Activated CD4-positive, alpha-beta memory T cell treated with anti-CD3 and anti-CD28 coated beads for 36 hours (primary cell): ENCODE measurements at regions of chr5 and their contacts with region 1.

Region 1: DNA sequence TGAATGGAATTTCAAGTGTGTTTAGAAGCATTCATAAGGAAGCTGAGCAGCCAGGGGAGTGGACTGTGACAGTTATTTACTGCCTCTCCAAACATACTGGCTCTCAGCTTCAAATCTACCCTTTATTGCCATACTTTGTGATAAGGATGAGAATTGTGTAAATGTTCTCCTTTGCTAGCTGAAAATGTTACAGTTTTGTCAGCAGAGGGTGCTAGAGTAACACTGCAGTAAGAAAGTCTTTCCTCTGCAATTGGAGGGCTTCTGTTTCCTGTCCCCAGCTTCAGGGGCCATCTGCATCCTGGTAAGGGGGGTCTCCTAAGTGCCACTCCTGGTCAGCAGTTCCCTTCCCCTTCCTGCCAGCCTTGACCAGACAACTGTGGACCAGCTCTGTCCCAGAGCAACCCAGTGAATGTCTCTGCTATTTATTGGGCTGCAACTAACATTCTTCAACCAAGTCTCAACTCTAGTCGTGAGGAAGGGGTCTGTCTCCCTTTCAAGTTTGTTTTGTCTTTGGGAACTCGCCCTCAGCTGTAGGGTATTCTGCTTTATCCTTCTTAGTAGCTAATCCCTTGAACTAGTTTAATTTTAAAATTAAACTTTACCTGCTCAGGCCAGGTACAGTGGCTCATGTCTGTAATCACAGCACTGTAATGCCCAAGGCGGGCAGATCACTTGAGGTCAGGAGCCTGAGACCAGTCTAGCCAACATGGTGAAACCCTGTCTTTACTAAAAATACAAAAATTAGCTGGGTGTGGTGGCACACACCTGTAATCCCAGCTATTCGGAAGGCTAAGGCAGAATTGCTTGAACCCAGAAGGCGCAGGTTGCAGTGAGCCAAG is 45.3 kb downstream of the RAPGEF6 start:
- DNase-seq: peak; percentile 12
- H3K4me3 Mint-ChIP-seq: no peak overlapping the region
- H3K27ac Mint-ChIP-seq: no peak overlapping the region
- H3K4me1 Mint-ChIP-seq: peaks cover 35% of the 10 kb centered on the region
- H3K27me3 Mint-ChIP-seq: no peaks in the 10 kb centered on the region

Region 2: GRCh38 chr5:131563434-131564228 is 26.1 kb before region 1 on chr5:
- CTCF ChIA-PET with region 1: interaction called, 13 read pairs
- POLR2A ChIA-PET with region 1: no interaction called
- intact Hi-C with region 1: no loop called
- DNase-seq: no peak
- H3K4me3 Mint-ChIP-seq: no peak overlapping the region
- H3K27ac Mint-ChIP-seq: peak overlapping the region; percentile 24
- H3K4me1 Mint-ChIP-seq: peaks cover 55% of the 10 kb centered on the region
- H3K27me3 Mint-ChIP-seq: no peaks in the 10 kb centered on the region

Region 3: GRCh38 chr5:131610198-131611063 is 20.7 kb after region 1 on chr5:
- CTCF ChIA-PET with region 1: interaction called, 13 read pairs
- POLR2A ChIA-PET with region 1: interaction called, 4 read pairs
- intact Hi-C with region 1: no loop called
- DNase-seq: no peak
- H3K4me3 Mint-ChIP-seq: no peak overlapping the region
- H3K27ac Mint-ChIP-seq: no peak overlapping the region
- H3K4me1 Mint-ChIP-seq: peaks cover 47% of the 10 kb centered on the region
- H3K27me3 Mint-ChIP-seq: no peaks in the 10 kb centered on the region

Region 4: GRCh38 chr5:131628990-131629389 is 39.3 kb after region 1 on chr5:
- CTCF ChIA-PET with region 1: interaction called, 27 read pairs
- POLR2A ChIA-PET with region 1: interaction called, 5 read pairs
- intact Hi-C with region 1: no loop called
- DNase-seq: no peak
- H3K4me3 Mint-ChIP-seq: no peak overlapping the region
- H3K27ac Mint-ChIP-seq: peak overlapping the region; percentile 11
- H3K4me1 Mint-ChIP-seq: peaks cover 48% of the 10 kb centered on the region
- H3K27me3 Mint-ChIP-seq: no peaks in the 10 kb centered on the region

Region 5: DNA sequence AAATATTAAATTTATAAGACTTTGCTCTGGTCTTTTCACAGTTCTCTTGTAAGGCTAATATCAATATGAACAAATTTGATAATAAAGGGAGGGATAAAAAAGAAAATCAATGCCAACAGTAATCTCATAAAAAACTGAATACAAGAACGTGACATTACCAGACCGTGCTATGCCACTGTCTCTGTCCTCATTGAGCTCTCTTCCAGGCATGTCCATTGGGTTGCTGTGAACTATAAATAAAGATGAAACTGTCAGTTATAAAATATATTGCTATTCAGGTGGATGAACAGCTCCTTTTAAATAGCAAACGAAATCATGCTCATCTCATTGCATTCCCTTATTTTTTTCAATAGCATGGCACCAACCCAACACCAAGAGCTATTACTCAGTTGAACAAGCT is 119.3 kb after region 1 on chr5:
- CTCF ChIA-PET with region 1: interaction called, 12 read pairs
- POLR2A ChIA-PET with region 1: no interaction called
- intact Hi-C with region 1: no loop called
- DNase-seq: no peak
- H3K4me3 Mint-ChIP-seq: no peak overlapping the region
- H3K27ac Mint-ChIP-seq: no peak overlapping the region
- H3K4me1 Mint-ChIP-seq: peaks cover 3% of the 10 kb centered on the region
- H3K27me3 Mint-ChIP-seq: no peaks in the 10 kb centered on the region

Region 6: DNA sequence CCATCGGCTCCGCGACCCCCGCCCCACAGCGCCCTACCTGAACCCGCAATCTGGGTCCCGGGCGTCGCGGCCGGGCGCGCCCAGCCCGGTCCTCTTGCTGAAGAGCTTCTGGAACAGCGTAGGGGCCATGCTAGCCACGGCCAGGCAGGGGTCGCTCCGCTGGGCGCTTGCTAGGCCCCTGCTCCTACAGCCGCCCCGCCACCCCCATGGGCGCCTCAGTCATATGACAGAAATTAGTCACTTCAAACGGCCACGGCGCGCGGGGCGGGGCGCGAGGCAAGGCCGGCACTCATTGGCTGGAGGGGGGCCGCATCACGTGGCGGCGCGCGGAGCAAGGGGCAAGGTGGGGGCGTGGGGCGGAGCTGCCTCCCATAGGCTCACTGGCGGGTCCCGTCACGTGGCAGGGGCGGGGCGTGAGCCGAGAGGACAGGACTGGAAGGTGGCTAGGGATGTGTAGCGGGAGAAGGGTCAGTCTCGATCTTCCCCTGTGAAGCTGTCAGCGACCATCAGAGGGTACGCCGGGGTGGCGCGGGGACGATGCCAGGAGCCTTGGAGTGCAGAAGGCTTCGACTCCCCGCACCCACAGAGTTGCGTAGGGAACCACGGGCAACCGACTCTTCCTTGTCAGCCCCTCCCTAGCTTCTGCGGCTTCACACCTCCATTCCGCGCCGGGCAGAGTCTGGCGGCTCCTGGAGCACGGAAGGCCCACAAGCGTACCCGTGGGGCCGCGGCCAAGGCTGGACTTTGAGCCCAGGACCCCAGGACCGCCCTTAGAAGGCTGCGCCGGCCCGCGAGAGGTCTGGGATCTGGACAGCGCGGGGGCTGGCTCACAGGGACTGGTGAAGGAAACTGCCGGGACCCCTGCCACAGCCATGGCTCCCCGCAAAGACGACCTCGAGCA is 207.3 kb after region 1 on chr5 and contains the start of gene FNIP1:
- CTCF ChIA-PET with region 1: interaction called, 9 read pairs
- POLR2A ChIA-PET with region 1: no interaction called
- intact Hi-C with region 1: loop called (anchors 1 kb)
- DNase-seq: peak; percentile 99
- H3K4me3 Mint-ChIP-seq: peak within 1 kb of the TSS; percentile 97
- H3K27ac Mint-ChIP-seq: peak within 1 kb of the TSS; percentile 84
- H3K4me1 Mint-ChIP-seq: peaks cover 33% of the 10 kb centered on the region
- H3K27me3 Mint-ChIP-seq: no peaks in the 10 kb centered on the region
- total RNA-seq, gene FNIP1: 14.0 to 15.9 TPM

Region 7: DNA sequence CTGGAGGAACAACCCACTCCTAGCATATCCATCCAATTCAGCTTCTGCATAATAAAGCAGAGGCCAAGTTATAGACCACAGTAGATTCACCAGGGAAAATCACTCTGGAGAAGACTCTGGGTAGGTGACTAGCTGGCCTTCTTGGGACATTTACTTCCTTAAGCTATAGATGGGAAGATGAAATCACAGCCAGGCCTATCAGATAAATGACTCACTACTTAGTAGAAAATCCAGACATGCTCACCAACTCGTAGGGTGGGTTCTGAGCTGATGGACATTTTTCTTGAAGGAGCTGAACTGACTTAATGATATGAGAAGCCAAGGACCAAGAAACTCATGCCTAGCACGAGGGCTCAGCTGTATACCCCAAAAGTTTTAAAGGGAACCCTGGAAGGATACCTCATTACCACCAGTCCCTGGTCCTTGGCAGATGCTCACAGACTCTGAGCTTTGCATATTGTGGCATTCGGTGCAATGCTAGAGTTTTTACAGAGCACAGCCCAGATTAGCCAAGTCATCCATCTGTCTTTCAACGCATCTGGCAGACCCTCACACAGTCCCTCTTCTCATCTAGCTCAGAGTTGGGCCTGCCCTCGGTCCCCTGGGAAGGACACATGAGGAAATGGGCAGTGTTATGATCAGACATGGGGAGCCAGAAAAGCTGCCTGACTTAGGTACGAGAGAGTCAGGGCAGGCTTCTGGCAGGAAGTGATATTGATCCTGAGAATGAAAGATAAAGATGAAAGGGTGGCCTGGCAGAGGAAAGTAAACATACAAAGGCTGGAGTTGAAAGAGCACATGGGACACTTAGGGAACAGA is 406.7 kb after region 1 on chr5:
- CTCF ChIA-PET with region 1: interaction called, 14 read pairs
- POLR2A ChIA-PET with region 1: no interaction called
- intact Hi-C with region 1: no loop called
- DNase-seq: no peak
- H3K4me3 Mint-ChIP-seq: no peak overlapping the region
- H3K27ac Mint-ChIP-seq: no peak overlapping the region
- H3K4me1 Mint-ChIP-seq: peaks cover 42% of the 10 kb centered on the region
- H3K27me3 Mint-ChIP-seq: no peaks in the 10 kb centered on the region